OCI-LY7 (cell line): ENCODE measurements at regions of chr9 and their contacts with region 1.

Region 1: GRCh38 chr9:90142580-90142979 is 500.0 kb downstream of the DIRAS2 start:
- DNase-seq: peak; percentile 59
- H3K4me3 ChIP-seq: no peak overlapping the region
- H3K27ac ChIP-seq: no peak overlapping the region
- H3K4me1 ChIP-seq: no peaks in the 10 kb centered on the region
- CTCF ChIP-seq: peak; percentile 90

Region 2: GRCh38 chr9:90156315-90156714 is 13.7 kb after region 1 on chr9:
- CTCF ChIA-PET with region 1: no interaction called
- POLR2A ChIA-PET with region 1: no interaction called
- intact Hi-C with region 1: no loop called
- DNase-seq: no peak
- H3K4me3 ChIP-seq: no peak overlapping the region
- H3K27ac ChIP-seq: no peak overlapping the region
- H3K4me1 ChIP-seq: no peaks in the 10 kb centered on the region
- CTCF ChIP-seq: no peak

Region 3: GRCh38 chr9:90219548-90220118 is 77.1 kb after region 1 on chr9:
- CTCF ChIA-PET with region 1: no interaction called
- POLR2A ChIA-PET with region 1: no interaction called
- intact Hi-C with region 1: loop called (anchors 1 kb)
- DNase-seq: peak; percentile 19
- H3K4me3 ChIP-seq: no peak overlapping the region
- H3K27ac ChIP-seq: no peak overlapping the region
- H3K4me1 ChIP-seq: no peaks in the 10 kb centered on the region
- CTCF ChIP-seq: peak; percentile 69